Panc1 (cell line): ENCODE measurements at regions of chr19 and their contacts with region 1.

Region 1: DNA sequence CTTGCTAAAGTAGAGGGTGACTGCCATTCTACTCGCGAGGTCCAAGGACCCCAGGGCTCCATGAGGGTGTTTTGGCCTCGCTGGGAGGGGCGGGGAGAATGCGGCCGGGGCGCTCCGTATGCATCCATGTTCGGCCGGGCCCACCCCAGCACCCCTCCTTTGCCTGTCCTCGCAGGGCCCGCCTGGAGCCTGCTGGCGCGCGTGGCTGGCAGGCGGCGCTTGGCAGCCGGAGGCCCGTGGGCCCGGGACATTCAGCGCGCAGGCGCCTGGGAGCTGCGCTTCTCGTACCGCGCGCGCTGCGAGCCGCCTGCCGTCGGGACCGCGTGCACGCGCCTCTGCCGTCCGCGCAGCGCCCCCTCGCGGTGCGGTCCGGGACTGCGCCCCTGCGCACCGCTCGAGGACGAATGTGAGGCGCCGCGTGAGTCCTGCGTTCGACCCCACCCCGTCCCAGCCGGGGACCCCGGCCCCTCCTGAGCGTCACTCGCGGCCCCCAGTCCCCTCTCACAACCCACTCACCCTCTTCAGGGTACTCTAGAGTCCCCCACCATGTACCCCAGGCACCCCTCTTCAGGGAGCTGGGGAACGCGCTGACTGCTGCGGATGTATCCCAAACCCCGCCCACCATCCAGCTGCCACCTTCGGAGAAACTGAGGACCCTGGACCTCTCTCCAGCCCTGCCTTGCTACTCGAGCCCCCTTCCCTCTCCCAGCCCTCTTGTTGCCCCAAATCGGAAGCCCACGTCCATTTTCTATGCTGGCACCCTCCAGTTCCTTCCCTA is 4.1 kb downstream of the DLL3 start:
- DNase-seq: peak; percentile 93
- ATAC-seq: peak; percentile 24
- H3K4me3 ChIP-seq: peak overlapping the region in 1 of 2 experiments; percentile 34; a peak in 2 of 4 replicates
- H3K27ac ChIP-seq: peak overlapping the region; percentile 3; the same call in 1 of the 2 replicates
- H3K4me1 ChIP-seq: peaks cover 27% of the 10 kb centered on the region
- H3K27me3 ChIP-seq: peaks cover 8% of the 10 kb centered on the region
- CTCF ChIP-seq: no peak

Region 2: GRCh38 chr19:39428283-39429112 is 74.3 kb before region 1 on chr19:
- CTCF ChIA-PET with region 1: interaction called, 9 read pairs
- POLR2A ChIA-PET with region 1: interaction called, 6 read pairs
- in situ Hi-C with region 1: loop called (anchors 5 kb)
- intact Hi-C with region 1: no loop called
- DNase-seq: peak; percentile 92
- ATAC-seq: peak; percentile 70
- H3K4me3 ChIP-seq: peak overlapping the region; percentile 0 to 17; a peak in 3 of 4 replicates
- H3K27ac ChIP-seq: peak overlapping the region; percentile 86
- H3K4me1 ChIP-seq: peaks cover 75% of the 10 kb centered on the region
- H3K27me3 ChIP-seq: no peaks in the 10 kb centered on the region
- CTCF ChIP-seq: no peak

Region 3: DNA sequence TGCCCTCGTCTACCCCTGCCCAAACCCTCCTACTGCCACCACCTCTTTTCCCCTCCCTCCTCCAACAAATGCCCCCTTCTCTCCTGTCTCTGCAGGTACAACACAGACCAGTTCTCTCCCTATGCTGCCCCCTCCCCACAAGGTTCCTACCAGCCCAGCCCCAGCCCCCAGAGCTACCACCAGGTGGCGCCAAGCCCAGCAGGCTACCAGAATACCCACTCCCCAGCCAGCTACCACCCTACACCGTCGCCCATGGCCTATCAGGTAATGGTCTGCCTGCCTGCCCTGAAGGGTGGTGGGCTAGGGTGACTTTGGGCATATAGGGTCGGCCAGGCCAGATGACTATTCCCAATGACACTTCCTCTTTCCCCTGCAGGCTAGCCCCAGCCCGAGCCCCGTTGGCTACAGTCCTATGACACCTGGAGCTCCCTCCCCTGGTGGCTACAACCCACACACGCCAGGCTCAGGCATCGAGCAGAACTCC is 28.6 kb before region 1 on chr19:
- CTCF ChIA-PET with region 1: interaction called, 89 read pairs
- POLR2A ChIA-PET with region 1: no interaction called
- in situ Hi-C with region 1: no loop called
- intact Hi-C with region 1: no loop called
- DNase-seq: no peak
- ATAC-seq: peak; percentile 75
- H3K4me3 ChIP-seq: no peak overlapping the region
- H3K27ac ChIP-seq: no peak overlapping the region
- H3K4me1 ChIP-seq: no peaks in the 10 kb centered on the region
- H3K27me3 ChIP-seq: no peaks in the 10 kb centered on the region
- CTCF ChIP-seq: no peak

Region 4: GRCh38 chr19:39514840-39515550 is 12.2 kb after region 1 on chr19 and contains the start of gene SELENOV:
- CTCF ChIA-PET with region 1: interaction called, 49 read pairs
- POLR2A ChIA-PET with region 1: interaction called, 14 read pairs
- in situ Hi-C with region 1: no loop called
- intact Hi-C with region 1: no loop called
- DNase-seq: no peak
- ATAC-seq: peak; percentile 56
- H3K4me3 ChIP-seq: peak within 1 kb of the TSS; percentile 30 to 55
- H3K27ac ChIP-seq: peak within 1 kb of the TSS; percentile 5
- H3K4me1 ChIP-seq: peaks cover 26% of the 10 kb centered on the region
- H3K27me3 ChIP-seq: peaks cover 23% of the 10 kb centered on the region
- CTCF ChIP-seq: no peak
- total RNA-seq, gene SELENOV: 0.80 TPM

Region 5: DNA sequence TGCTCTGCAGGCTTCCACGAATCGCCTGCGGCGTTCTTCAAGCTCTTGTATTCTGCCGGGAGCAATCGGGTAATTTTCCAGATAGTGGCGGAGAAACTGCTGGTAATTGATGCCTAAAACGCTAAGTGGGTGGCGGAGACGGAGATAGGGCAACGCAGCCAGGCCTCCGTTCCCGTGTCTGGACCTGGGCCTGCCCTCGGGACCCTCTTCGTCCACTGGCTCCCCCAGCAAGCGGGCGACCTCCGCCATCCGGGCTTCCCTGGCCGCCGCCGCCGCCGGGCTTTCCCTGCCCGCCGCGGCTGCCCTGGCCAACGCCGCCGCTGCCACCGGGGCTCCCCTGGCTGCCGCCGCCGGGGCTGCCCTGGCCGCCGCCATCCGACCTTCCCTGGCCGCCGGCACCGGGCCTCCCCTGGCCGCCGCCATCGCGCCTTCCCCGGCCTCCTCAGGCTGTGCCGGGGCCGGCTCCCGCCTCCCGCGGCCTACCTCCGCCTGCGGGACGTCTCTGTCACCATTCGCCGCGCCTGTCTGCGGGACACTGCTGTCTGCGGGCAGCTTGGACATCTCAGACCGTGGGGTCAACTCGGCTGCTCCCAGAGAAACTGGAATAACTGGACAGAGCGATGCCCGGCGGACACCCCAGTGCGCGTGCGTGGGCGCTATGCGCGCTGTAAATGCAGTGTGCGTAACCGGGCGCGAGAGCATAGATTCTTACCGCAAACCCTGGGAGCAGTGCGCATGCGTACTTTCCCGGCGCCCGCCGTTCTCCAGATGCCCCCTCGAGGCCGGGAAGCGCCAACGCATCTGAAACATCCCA is 36.9 kb after region 1 on chr19 and contains the start of gene EID2:
- CTCF ChIA-PET with region 1: interaction called, 130 read pairs
- POLR2A ChIA-PET with region 1: interaction called, 17 read pairs
- in situ Hi-C with region 1: loop called (anchors 5 kb)
- intact Hi-C with region 1: no loop called
- DNase-seq: peak; percentile 100
- ATAC-seq: peak; percentile 97
- H3K4me3 ChIP-seq: peak within 1 kb of the TSS; percentile 36 to 59
- H3K27ac ChIP-seq: peak within 1 kb of the TSS; percentile 78
- H3K4me1 ChIP-seq: peaks cover 26% of the 10 kb centered on the region
- H3K27me3 ChIP-seq: peaks cover 11% of the 10 kb centered on the region
- CTCF ChIP-seq: no peak
- total RNA-seq, gene EID2: 163 TPM

Region 6: GRCh38 chr19:39645800-39646411 is 143.1 kb after region 1 on chr19:
- CTCF ChIA-PET with region 1: no interaction called
- POLR2A ChIA-PET with region 1: no interaction called
- in situ Hi-C with region 1: no loop called
- intact Hi-C with region 1: no loop called
- DNase-seq: no peak
- ATAC-seq: no peak
- H3K4me3 ChIP-seq: no peak overlapping the region
- H3K27ac ChIP-seq: no peak overlapping the region
- H3K4me1 ChIP-seq: no peaks in the 10 kb centered on the region
- H3K27me3 ChIP-seq: peaks cover 71% of the 10 kb centered on the region
- CTCF ChIP-seq: peak; percentile 19; the same call in 1 of the 2 replicates

Region 7: GRCh38 chr19:39671738-39672363 is 169.0 kb after region 1 on chr19:
- CTCF ChIA-PET with region 1: interaction called, 17 read pairs
- POLR2A ChIA-PET with region 1: interaction called, 4 read pairs
- in situ Hi-C with region 1: no loop called
- intact Hi-C with region 1: no loop called
- DNase-seq: peak; percentile 100
- ATAC-seq: peak; percentile 95
- H3K4me3 ChIP-seq: no peak overlapping the region
- H3K27ac ChIP-seq: no peak overlapping the region
- H3K4me1 ChIP-seq: peaks cover 11% of the 10 kb centered on the region
- H3K27me3 ChIP-seq: peaks cover 57% of the 10 kb centered on the region
- CTCF ChIP-seq: no peak